ENCODE measurements at regions of chr11 and their contacts with region 1.

Region 1: DNA sequence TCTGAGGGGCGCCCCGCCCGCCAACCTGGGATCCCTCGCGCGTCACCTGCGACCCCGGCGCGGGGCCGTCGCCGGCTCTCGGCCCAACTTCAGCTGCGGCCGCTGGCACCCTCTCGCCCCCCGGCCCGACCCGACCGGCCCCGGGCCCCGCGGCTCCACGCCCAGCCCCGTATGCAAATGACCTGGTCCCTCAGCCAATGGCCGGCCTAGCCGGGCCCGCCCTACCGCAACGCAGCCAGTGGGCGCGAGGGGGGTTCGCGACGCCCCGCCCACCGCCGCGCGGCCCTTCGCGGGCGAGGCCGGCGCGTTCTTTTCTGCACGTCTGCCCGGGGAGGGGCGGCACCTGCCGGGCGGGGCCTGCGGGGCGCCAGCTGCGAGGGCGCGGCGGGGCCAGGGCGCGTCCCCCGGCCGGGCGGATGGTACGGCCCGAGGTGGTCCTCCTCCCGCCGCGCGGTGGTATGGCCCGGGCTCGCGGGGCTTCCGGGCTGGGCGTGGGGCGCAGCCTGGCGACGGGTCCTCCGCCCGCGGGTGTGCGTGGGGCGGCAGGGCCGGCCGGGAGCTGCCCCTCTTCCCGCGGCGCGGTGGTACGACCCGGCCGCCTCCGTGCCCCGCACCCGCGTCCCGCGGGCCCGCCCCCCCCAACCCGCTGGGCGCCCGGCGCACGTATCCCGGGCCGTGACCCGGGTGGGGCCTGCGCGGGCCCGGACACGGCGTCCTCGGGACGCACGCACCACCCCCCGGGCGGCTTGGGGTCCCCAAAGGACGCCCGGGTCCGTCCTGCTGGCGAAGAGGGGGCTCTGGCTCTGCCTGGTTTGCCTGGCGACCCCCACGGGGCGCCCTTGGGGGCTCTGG is 7.7 kb upstream of the PHRF1 start:
- DNase-seq: peak; percentile 97
- H3K4me3 Mint-ChIP-seq: peak overlapping the region; percentile 71
- H3K27ac Mint-ChIP-seq: no peak overlapping the region
- H3K4me1 Mint-ChIP-seq: no peaks in the 10 kb centered on the region
- H3K27me3 Mint-ChIP-seq: no peaks in the 10 kb centered on the region
- CTCF ChIP-seq: no peak

Region 2: GRCh38 chr11:540577-541413 is 27.7 kb before region 1 on chr11:
- CTCF ChIA-PET with region 1: no interaction called
- intact Hi-C with region 1: no loop called
- DNase-seq: no peak
- H3K4me3 Mint-ChIP-seq: no peak overlapping the region
- H3K27ac Mint-ChIP-seq: no peak overlapping the region
- H3K4me1 Mint-ChIP-seq: peaks cover 7% of the 10 kb centered on the region
- H3K27me3 Mint-ChIP-seq: no peaks in the 10 kb centered on the region
- CTCF ChIP-seq: no peak

Region 3: GRCh38 chr11:706957-707816 is 138.7 kb after region 1 on chr11:
- CTCF ChIA-PET with region 1: no interaction called
- intact Hi-C with region 1: loop called (anchors 10 kb)
- DNase-seq: peak; percentile 72
- H3K4me3 Mint-ChIP-seq: peak overlapping the region; percentile 88
- H3K27ac Mint-ChIP-seq: peak overlapping the region; percentile 87
- H3K4me1 Mint-ChIP-seq: peaks cover 33% of the 10 kb centered on the region
- H3K27me3 Mint-ChIP-seq: no peaks in the 10 kb centered on the region
- CTCF ChIP-seq: no peak

Measured in Calu3 (cell line).